CD8-positive, alpha-beta memory T cell (primary cell): ENCODE measurements at regions of chr1 and their contacts with region 1.

Region 1: DNA sequence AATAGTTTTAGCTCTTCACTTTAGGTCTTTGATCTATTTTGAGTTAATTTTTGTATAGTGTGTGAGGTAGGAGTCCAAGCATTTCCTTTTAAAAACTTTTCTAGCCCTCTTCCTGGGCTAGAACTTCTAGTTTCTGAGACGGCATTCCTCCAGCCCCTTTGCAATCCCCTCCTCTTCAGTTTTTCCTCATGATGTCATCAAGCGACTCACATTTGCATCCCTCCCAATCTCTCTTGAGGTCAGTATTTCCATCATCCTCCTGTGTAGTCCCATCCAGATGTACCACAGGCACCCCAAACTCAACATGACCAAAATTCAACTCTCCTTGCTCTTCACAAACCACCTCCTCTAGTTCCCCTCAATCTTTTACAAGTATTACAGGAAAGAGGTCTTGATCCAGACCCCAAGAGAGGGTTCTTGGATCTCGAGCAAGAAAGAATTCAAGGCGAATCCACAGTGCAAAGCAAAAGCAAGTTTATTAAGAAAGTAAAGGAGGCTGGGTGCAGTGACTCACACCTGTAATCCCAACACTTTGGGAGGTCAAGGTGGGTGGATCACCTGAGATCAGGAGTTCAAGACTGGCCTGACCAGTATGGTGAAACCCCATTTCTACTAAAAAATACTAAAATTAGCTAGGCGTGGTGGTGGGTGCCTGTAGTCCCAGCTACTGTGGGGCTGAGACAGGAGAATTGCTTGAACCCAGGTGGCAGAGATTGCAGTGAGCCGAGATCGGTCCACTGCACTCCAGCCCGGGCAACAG is 10.9 kb downstream of the HMGN2 start:
- DNase-seq: no peak
- H3K4me3 ChIP-seq: no peak overlapping the region
- H3K4me3 Mint-ChIP-seq: no peak overlapping the region
- H3K27ac ChIP-seq: no peak overlapping the region
- H3K27ac Mint-ChIP-seq: peak overlapping the region in 6 of 8 donors; percentile 15 to 79 (median 43)
- H3K4me1 ChIP-seq: no peaks in the 10 kb centered on the region
- H3K4me1 Mint-ChIP-seq: peaks cover 0 to 6% (median 4%) of the 10 kb centered on the region in 3 donors
- H3K27me3 ChIP-seq: no peaks in the 10 kb centered on the region
- H3K27me3 Mint-ChIP-seq: no peaks in the 10 kb centered on the region

Region 2: DNA sequence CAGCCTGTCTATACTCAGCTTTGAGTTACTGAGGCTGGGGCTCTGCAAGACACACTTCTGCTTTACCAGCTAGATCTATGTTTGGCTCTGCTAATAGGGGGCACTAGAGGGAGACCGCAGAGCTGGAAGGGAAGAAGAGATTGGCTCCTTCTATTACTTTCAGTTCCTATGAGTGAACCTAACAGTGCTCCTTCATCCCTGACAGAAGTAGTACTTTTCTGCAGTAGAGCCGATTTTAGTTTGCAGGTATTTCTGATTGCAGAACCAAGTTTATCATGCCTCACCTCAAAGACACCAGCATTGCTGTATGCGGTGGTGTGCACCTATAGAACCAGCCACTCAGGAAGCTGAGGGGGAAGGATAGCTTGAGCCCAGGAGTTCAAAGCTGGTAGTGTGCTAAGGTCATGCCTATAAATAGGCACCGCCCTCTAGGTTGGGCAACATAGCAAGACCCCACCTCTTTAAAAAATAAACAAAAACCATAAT is 337.7 kb after region 1 on chr1:
- CTCF ChIA-PET with region 1: no interaction called
- POLR2A ChIA-PET with region 1: interaction called, 13 read pairs
- DNase-seq: peak in 2 of 5 donors; percentile 53 to 61
- H3K4me3 ChIP-seq: peak overlapping the region; percentile 26
- H3K4me3 Mint-ChIP-seq: peak overlapping the region; percentile 81 to 88 (median 84)
- H3K27ac ChIP-seq: no peak overlapping the region
- H3K27ac Mint-ChIP-seq: peak overlapping the region; percentile 87 to 95 (median 91)
- H3K4me1 ChIP-seq: peaks cover 22% of the 10 kb centered on the region
- H3K4me1 Mint-ChIP-seq: peaks cover 14 to 36% (median 25%) of the 10 kb centered on the region in 3 donors
- H3K27me3 ChIP-seq: no peaks in the 10 kb centered on the region
- H3K27me3 Mint-ChIP-seq: no peaks in the 10 kb centered on the region